Adrenal gland (tissue), 19 donors: ENCODE measurements at regions of chr3 and their contacts with region 1.

Region 1: DNA sequence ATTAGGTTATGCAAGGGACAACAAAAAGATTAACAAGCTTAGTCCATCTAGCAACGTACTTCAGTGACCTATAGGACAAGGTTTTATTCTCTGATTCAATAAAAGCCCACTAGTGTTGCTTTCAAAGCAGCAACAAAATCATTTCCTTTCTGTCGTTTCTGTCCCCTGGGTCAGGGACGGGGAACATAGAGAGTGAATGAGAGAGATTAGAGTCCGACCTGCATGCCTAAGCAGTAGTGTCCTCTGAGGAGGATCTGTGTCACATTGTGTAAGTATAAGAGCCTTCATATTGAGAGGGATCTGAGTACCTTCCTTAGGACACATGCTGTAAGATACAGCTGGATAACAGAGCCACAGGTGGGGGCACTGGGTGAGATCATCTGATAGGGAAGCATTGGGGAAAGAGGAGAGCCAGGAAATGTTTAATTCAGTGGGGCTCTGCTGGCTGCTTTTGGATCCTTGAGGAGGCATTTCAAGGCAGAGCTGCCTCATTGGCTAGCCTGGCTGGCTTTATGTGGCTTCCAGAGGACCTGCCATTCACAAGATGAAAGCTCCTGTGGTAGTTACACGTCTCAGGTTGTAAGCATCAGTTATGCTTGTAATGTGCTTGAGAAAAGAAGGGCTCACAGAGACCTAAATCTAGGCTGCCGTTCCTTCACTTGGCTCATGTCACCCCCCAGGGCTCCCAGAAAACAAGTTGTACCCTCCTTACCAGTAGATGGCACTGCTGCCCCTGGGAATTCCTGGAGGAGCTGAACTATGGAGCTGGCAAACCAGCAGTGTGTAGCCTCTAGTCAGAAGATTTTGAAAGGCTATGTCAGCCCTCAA is 2.7 kb downstream of the TMEM108 start:
- DNase-seq: peak; percentile 85 to 93 (median 89)
- H3K4me3 ChIP-seq: peak overlapping the region in 1 of 4 donors; percentile 12
- H3K27ac ChIP-seq: peak overlapping the region; percentile 11 to 78 (median 58)
- H3K4me1 ChIP-seq: peaks cover 12 to 40% of the 10 kb centered on the region in 2 donors
- H3K27me3 ChIP-seq: no peaks in the 10 kb centered on the region
- CTCF ChIP-seq: peak; percentile 72 to 88 (median 84)
- POLR2A ChIP-seq: no peak

Region 2: DNA sequence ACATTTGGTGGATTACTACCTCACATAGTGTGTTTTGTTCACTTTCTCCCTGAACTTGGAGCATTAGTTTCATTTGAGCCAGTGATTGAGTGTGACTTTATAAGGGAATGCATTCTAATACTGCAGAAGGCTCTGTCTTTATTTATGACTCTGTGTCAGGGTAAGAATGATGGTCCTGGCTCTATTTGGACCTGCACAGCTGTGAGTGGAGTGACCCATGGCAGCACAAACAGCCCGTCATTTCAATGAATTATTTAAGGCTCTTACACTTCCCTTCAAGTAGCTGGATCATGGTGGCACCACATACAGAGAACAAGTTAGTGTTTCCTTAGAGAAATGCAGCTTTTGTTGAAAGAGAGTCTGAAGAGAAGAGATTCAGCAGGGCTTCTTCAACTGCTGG is 13.7 kb after region 1 on chr3:
- intact Hi-C with region 1: no loop called
- DNase-seq: no peak
- H3K4me3 ChIP-seq: no peak overlapping the region
- H3K27ac ChIP-seq: no peak overlapping the region
- H3K4me1 ChIP-seq: peaks cover 0 to 9% of the 10 kb centered on the region in 2 donors
- H3K27me3 ChIP-seq: no peaks in the 10 kb centered on the region
- CTCF ChIP-seq: no peak
- POLR2A ChIP-seq: no peak

Region 3: DNA sequence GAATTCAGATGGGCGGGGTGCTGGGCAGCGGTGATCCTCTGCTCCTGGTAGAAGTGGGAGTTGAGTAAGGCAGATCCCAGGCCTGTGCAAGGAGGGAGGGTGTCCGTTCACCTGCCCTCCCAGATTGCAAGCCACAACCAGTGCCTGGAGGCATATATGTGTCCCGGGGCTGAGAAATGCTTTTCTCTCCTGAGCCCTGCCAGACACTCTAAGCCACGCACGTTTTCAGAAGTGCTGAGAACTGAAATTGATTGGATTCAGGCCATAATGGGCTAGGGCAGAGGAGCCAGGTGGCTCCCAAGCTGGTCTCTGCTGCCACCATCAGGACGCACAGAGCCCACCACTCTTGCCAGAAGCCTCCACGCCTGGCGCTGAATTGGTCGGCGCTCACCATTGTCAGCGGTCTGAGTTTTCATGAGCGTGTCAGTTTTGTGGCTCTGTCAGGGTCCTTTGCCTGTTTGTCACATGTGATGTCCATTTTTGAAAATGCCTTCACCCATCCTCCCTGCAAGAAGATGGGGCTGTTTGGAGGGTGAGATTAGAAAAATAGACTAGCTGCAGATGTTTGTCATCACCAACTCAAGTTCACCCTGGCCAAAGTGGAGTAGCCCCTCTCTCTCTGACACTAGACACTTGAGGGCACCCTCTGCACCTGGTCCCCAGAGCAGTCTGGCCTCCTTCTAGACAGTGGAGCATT is 343.6 kb after region 1 on chr3:
- intact Hi-C with region 1: loop called (anchors 2 to 5 kb)
- DNase-seq: peak; percentile 67 to 91 (median 80)
- H3K4me3 ChIP-seq: no peak overlapping the region
- H3K27ac ChIP-seq: no peak overlapping the region
- H3K4me1 ChIP-seq: peaks cover 3 to 10% of the 10 kb centered on the region in 2 donors
- H3K27me3 ChIP-seq: no peaks in the 10 kb centered on the region
- CTCF ChIP-seq: peak; percentile 74 to 93 (median 90)
- POLR2A ChIP-seq: no peak

Region 4: GRCh38 chr3:133424937-133425869 is 384.3 kb after region 1 on chr3:
- intact Hi-C with region 1: loop called in 1 of 2 experiments (anchors 5 kb)
- DNase-seq: no peak
- H3K4me3 ChIP-seq: no peak overlapping the region
- H3K27ac ChIP-seq: no peak overlapping the region
- H3K4me1 ChIP-seq: peaks cover 0 to 4% of the 10 kb centered on the region in 2 donors
- H3K27me3 ChIP-seq: no peaks in the 10 kb centered on the region
- CTCF ChIP-seq: no peak
- POLR2A ChIP-seq: no peak